ENCODE measurements at regions of chr22 and their contacts with region 1.

Region 1: DNA sequence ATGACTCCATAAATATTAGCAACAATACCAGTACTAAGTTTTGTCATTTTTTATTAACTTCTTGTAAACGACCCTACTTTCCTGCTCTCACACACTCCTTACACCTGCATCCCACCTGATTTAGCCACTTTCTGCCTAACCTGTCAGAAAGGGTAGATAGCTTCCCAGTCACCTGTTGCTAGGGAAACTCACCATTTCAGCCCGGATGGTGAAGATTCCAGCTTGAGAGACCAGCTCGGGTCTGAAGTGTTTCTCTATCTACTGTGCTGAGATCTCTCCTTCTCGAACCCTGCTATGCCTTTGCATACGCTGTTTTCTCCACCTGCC is at the start of gene PARVG:
- H3K4me3 Mint-ChIP-seq: peak within 1 kb of the TSS; percentile 92
- H3K27ac Mint-ChIP-seq: peak within 1 kb of the TSS; percentile 91
- H3K4me1 Mint-ChIP-seq: peaks cover 53% of the 10 kb centered on the region
- H3K27me3 Mint-ChIP-seq: no peaks in the 10 kb centered on the region

Region 2: GRCh38 chr22:44012162-44012561 is 168.5 kb before region 1 on chr22:
- intact Hi-C with region 1: loop called (anchors 5 kb)
- H3K4me3 Mint-ChIP-seq: no peak overlapping the region
- H3K27ac Mint-ChIP-seq: peak overlapping the region; percentile 91
- H3K4me1 Mint-ChIP-seq: peaks cover 24% of the 10 kb centered on the region
- H3K27me3 Mint-ChIP-seq: no peaks in the 10 kb centered on the region

Region 3: DNA sequence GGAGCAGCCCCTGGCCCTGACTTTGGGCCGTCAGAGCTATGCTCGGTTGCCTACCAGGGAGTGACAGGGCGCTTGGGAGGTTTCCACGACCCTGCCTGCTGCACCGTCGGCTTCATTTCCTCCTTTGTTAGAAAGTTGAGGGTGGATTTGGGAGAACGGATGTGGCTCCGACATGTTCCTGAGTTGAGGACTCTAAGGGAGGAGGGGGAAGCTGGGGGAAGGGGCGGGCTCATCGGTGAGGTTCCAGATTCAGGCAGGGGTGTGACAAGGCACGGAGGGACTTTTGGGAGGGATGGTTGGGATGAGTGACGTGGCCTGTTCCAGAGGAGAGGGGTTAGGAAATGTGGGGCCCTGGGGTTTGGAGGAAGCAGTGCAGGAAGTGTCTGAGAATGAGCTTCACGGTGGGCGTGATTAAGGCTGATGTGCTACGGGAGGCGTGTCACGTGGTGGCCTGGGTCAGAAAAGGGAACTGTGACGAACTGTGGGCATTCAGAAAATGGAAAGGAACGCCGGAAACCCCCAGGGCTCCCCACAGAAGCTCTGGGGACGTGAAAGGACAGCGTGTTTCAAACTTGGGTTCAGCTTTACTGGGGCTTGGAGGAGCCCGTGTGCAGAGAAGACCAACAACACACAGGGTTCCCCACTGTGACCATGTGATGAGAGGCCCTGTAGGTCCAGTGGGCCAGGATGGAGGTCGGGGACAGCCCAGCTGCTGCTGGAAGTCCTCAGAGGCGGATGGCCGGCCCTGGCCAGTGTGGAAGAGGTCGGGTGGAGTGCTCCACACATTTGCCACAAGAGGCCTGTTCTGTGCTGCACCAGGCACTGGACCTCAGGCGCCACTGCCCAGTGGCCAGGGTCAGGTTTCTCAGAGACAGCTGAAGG is 153.8 kb before region 1 on chr22:
- intact Hi-C with region 1: loop called (anchors 5 kb)
- H3K4me3 Mint-ChIP-seq: peak overlapping the region; percentile 82
- H3K27ac Mint-ChIP-seq: peak overlapping the region; percentile 100
- H3K4me1 Mint-ChIP-seq: peaks cover 87% of the 10 kb centered on the region
- H3K27me3 Mint-ChIP-seq: no peaks in the 10 kb centered on the region

Region 4: GRCh38 chr22:44202261-44202789 is 21.7 kb after region 1 on chr22:
- intact Hi-C with region 1: no loop called
- H3K4me3 Mint-ChIP-seq: no peak overlapping the region
- H3K27ac Mint-ChIP-seq: no peak overlapping the region
- H3K4me1 Mint-ChIP-seq: peaks cover 34% of the 10 kb centered on the region
- H3K27me3 Mint-ChIP-seq: no peaks in the 10 kb centered on the region

Region 5: GRCh38 chr22:44220727-44221680 is 40.3 kb after region 1 on chr22:
- intact Hi-C with region 1: no loop called
- H3K4me3 Mint-ChIP-seq: no peak overlapping the region
- H3K27ac Mint-ChIP-seq: no peak overlapping the region
- H3K4me1 Mint-ChIP-seq: no peaks in the 10 kb centered on the region
- H3K27me3 Mint-ChIP-seq: peaks cover 22% of the 10 kb centered on the region

Measured in dendritic cell treated with granulocyte-macrophage colony-stimulating factor and Interleukin-4, amounts not matched to agents 40 ng/mL and 50 ng/mL, for 4 days (primary cell).